A549 (cell line): ENCODE measurements at regions of chr11 and their contacts with region 1.

Region 1: GRCh38 chr11:122505304-122506006 is 150.1 kb upstream of the UBASH3B start:
- DNase-seq: peak; percentile 41 to 73
- ATAC-seq: peak; percentile 96 to 99
- H3K4me3 ChIP-seq: no peak overlapping the region
- H3K27ac ChIP-seq: peak overlapping the region; percentile 42 to 67; a peak in 4 of 6 replicates
- H3K4me1 ChIP-seq: peaks cover 6% of the 10 kb centered on the region; the same call in 1 of the 3 replicates
- CTCF ChIP-seq: peak; percentile 76
- EP300 ChIP-seq: no peak
- POLR2A ChIP-seq: no peak
- RAD21 ChIP-seq: peak; percentile 88 to 89

Region 2: DNA sequence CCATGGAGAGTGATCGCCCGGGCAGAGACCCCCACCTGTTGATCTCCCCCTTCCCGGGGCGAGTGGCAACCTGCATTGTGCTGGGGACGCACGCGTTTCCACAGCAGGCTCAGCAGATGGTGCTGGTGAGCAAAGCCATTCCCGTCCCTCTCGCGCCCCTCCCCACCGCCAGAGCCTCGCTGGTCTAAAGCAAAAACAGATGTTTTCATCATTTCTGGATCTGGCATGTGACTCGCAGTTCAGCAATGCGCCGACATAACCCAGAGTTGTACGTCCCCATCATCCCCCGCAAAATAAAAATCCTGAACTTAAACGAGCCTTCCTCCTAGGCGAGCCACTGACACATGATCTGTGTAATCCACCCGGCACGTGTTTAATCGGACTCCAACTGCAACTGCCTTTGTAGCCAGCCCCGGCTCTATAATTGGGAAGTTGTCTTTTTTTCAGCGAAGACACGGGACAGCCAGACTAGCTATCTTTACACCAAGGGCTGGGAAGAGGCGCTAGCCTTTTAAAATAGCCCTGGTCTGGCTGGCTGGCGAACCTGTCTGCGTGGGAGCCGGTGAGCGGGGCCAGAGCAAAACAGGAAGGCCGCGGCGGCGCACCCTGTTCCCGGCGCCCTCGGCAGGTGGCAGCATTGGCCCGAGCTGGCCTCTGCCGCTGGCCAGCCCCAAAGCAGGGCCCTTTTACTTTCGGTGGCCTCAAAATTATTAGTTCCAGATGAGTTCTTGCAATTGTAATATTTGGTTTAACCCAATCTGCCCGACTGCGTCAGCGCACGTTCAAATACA is 849.7 kb before region 1 on chr11:
- CTCF ChIA-PET with region 1: interaction called, 78 read pairs
- POLR2A ChIA-PET with region 1: no interaction called
- DNase-seq: peak; percentile 72 to 73
- ATAC-seq: peak; percentile 93 to 98
- H3K4me3 ChIP-seq: peak overlapping the region; percentile 48
- H3K27ac ChIP-seq: peak overlapping the region; percentile 79 to 87
- H3K4me1 ChIP-seq: 0 out of 3 replicates have a peak, but pooled peaks cover 4% of the 10 kb centered on the region
- CTCF ChIP-seq: peak; percentile 57
- EP300 ChIP-seq: no peak
- POLR2A ChIP-seq: no peak
- RAD21 ChIP-seq: peak; percentile 79 to 91

Region 3: DNA sequence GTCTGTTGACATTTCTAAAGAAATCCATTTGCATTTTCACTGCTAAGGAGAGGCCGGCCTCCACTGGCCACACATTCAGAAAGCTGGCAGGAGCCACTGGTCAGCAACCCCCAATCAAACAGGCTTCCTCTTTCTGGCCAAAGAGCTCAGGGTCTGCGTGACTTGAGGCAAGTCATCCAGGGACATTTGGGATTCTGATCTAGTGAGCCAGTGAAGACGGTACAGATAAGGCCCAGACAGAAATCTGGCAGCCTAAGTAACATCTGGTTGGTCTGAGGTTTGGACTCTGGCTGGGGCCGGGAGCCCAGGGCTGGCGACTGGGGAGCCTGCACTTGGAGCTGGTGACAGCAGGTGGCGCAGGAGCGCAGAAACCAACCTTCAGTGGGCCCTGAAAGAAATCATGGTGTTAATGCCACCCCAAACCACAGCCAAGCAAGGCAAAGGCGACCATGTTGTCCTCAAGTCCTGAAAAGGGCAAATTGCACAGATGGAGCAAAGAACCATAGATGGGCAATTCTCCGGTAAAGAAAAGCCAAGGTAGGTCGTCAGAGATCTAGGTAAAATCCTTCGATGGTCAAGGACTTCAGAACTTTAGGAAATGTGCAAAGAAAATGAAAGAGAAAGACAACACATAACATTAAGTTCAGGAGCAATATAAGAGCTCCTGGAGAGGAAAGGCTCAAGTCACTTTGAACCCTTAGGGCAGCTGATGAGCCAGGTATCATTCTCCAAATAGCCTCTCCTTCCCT is 290.0 kb before region 1 on chr11:
- CTCF ChIA-PET with region 1: interaction called, 23 read pairs
- POLR2A ChIA-PET with region 1: no interaction called
- DNase-seq: peak; percentile 47 to 59
- ATAC-seq: peak; percentile 94 to 97
- H3K4me3 ChIP-seq: no peak overlapping the region
- H3K27ac ChIP-seq: peak overlapping the region; percentile 26 to 78; a peak in 3 of 6 replicates
- H3K4me1 ChIP-seq: peaks cover 26% of the 10 kb centered on the region
- CTCF ChIP-seq: peak; percentile 62
- EP300 ChIP-seq: no peak
- POLR2A ChIP-seq: no peak
- RAD21 ChIP-seq: peak; percentile 61 to 64

Region 4: DNA sequence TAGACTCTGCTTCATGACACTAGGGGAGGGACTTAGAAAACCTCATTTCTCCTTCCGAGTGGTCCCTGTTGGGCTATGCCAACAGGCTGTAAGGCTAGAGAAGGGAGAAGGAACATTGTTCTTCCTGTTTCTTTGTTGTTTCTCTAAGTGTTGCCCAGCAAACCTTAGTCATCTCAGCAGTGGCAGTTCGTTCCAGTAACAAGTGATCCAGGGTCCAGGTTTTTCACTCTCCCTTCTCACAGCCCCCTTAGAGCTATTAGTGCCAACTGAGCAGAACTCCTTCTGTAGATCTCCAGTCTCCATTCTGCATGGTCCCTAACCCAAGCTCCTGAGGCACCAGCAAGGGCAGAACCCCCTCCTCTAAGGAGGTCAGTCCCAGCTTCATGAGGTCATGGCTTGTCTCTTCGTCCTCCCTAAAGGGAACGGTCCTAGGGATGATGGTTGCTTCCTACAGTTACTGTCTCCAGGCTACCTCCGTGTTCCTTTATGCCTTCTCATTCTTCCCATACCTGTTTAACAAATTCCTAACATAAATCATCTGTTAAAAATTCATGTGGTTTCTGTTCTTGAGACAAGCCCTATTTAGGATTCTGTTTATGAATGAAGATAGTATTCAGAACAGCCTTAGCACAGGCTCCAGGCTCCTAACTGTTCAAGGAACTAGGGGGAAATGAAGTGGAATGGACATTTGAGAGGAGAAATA is 18.5 kb before region 1 on chr11:
- CTCF ChIA-PET with region 1: interaction called, 15 read pairs
- POLR2A ChIA-PET with region 1: no interaction called
- DNase-seq: peak in 1 of 2 experiments; percentile 5
- ATAC-seq: no peak
- H3K4me3 ChIP-seq: no peak overlapping the region
- H3K27ac ChIP-seq: no peak overlapping the region
- H3K4me1 ChIP-seq: no peaks in the 10 kb centered on the region
- CTCF ChIP-seq: no peak
- EP300 ChIP-seq: no peak
- POLR2A ChIP-seq: no peak
- RAD21 ChIP-seq: no peak

Region 5: DNA sequence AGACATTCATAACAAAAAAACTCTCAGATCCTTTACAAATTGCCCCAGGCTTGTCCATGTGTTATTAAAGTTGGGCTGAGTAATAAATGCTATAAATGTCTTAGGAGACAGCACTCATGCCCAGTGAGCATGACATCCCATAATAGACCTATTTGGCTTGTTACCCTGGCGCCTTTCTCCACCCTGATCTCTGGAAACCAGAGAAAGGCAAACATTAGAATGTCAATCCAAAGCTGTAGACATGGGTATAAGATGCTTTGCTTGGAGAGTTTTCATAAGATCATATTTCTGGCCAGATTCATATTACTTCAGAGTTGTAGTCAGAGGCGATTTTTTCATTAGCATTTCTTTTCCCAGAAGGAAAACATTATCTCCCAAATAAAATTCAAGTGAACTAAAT is 11.2 kb before region 1 on chr11:
- CTCF ChIA-PET with region 1: interaction called, 15 read pairs
- POLR2A ChIA-PET with region 1: interaction called, 3 read pairs
- DNase-seq: no peak
- ATAC-seq: no peak
- H3K4me3 ChIP-seq: no peak overlapping the region
- H3K27ac ChIP-seq: no peak overlapping the region
- H3K4me1 ChIP-seq: no peaks in the 10 kb centered on the region
- CTCF ChIP-seq: no peak
- EP300 ChIP-seq: no peak
- POLR2A ChIP-seq: no peak
- RAD21 ChIP-seq: no peak

Region 6: GRCh38 chr11:122521626-122522025 is 16.2 kb after region 1 on chr11:
- CTCF ChIA-PET with region 1: interaction called, 12 read pairs
- POLR2A ChIA-PET with region 1: no interaction called
- DNase-seq: no peak
- ATAC-seq: no peak
- H3K4me3 ChIP-seq: no peak overlapping the region
- H3K27ac ChIP-seq: no peak overlapping the region
- H3K4me1 ChIP-seq: no peaks in the 10 kb centered on the region
- CTCF ChIP-seq: no peak
- EP300 ChIP-seq: no peak
- POLR2A ChIP-seq: no peak
- RAD21 ChIP-seq: no peak

Region 7: DNA sequence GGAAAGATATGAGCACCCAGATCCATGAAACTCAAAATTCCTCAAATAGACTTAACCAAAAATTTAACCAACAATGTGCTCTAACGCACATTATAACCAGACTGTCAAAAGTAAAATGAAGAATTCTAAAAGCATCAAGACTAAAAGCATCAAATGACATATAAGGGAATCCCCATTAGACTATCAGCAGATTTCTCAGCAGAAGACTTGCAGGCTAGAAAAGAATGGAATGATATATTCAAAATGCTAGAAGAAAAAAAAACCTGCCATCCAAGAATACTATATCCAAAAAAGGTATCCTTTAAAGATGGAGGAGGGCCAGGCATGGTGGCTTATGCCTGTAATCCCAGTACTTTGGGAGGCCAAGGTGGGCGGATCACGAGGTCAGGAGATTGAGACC is 32.6 kb after region 1 on chr11:
- CTCF ChIA-PET with region 1: no interaction called
- POLR2A ChIA-PET with region 1: no interaction called
- DNase-seq: no peak
- ATAC-seq: no peak
- H3K4me3 ChIP-seq: no peak overlapping the region
- H3K27ac ChIP-seq: no peak overlapping the region
- H3K4me1 ChIP-seq: no peaks in the 10 kb centered on the region
- CTCF ChIP-seq: no peak
- EP300 ChIP-seq: no peak
- POLR2A ChIP-seq: no peak
- RAD21 ChIP-seq: no peak